HCT116 (cell line): ENCODE measurements at regions of chr9 and their contacts with region 1.

Region 1: DNA sequence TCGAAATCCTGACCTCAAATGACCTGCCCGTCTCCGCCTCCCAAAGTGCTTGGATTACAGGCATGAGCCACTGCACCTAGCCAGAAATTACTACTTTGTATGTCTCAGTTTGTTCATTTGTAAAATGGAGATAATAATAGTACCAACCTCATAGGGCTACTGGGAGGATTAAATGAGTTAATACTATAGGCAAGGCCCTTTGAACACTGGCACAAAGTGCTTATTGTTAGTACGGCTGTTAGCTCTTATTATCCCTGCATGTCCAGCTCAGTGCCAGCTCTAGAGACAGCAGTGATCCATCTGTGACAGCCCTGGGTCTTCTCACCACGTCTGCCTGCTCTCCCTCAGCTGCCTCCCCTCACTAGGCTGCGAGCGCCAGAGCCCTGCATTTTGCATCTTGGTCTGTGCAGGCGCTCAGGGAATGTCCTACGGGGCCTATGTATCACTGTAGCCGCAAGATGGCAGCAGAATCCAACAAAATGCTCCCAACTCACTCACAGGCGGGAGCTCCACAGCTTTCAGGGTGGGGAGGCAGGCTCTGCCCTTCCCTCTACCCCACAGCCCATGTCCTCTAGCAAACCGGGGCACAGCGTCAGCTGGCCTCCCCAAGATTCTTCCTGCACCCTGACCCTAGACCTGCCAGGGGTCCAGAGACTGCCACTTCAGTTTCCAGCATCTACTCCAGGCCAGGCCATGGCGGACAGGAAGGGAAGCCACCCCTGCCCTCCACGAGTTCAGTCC is 17.7 kb upstream of the AKNA start:
- DNase-seq: peak; percentile 48
- ATAC-seq: peak; percentile 98
- H3K4me3 ChIP-seq: no peak overlapping the region
- H3K27ac ChIP-seq: no peak overlapping the region
- H3K4me1 ChIP-seq: no peaks in the 10 kb centered on the region
- H3K27me3 ChIP-seq: no peaks in the 10 kb centered on the region
- CTCF ChIP-seq: peak; percentile 78 to 81 (median 80)
- POLR2A ChIP-seq: no peak
- RAD21 ChIP-seq: peak; percentile 93

Region 2: GRCh38 chr9:114487607-114488300 is 82.3 kb after region 1 on chr9:
- CTCF ChIA-PET with region 1: no interaction called
- POLR2A ChIA-PET with region 1: no interaction called
- RAD21 ChIA-PET with region 1: no interaction called
- intact Hi-C with region 1: loop called (anchors 5 kb)
- DNase-seq: peak; percentile 57
- ATAC-seq: peak; percentile 88
- H3K4me3 ChIP-seq: no peak overlapping the region
- H3K27ac ChIP-seq: no peak overlapping the region
- H3K4me1 ChIP-seq: peaks cover 19 to 38% of the 10 kb centered on the region in 2 experiments
- H3K27me3 ChIP-seq: no peaks in the 10 kb centered on the region
- CTCF ChIP-seq: peak; percentile 76 to 90 (median 86); a peak in 5 of 6 replicates
- POLR2A ChIP-seq: no peak
- RAD21 ChIP-seq: peak; percentile 82

Region 3: GRCh38 chr9:115524453-115525059 is 1119.1 kb after region 1 on chr9:
- CTCF ChIA-PET with region 1: no interaction called
- POLR2A ChIA-PET with region 1: no interaction called
- RAD21 ChIA-PET with region 1: no interaction called
- intact Hi-C with region 1: loop called (anchors 1 kb)
- DNase-seq: peak; percentile 47
- ATAC-seq: peak; percentile 86
- H3K4me3 ChIP-seq: no peak overlapping the region
- H3K27ac ChIP-seq: no peak overlapping the region
- H3K4me1 ChIP-seq: no peaks in the 10 kb centered on the region
- H3K27me3 ChIP-seq: 0 out of 2 replicates have a peak, but pooled peaks cover 3% of the 10 kb centered on the region
- CTCF ChIP-seq: peak; percentile 66 to 77 (median 71); a peak in 5 of 6 replicates
- POLR2A ChIP-seq: no peak
- RAD21 ChIP-seq: peak; percentile 91